ENCODE measurements at regions of chr6 and their contacts with region 1.

Region 1: GRCh38 chr6:169789982-169790927 is 38.8 kb downstream of the ERMARD start:
- DNase-seq: peak; percentile 79
- ATAC-seq: peak; percentile 95 to 97

Region 2: GRCh38 chr6:169627736-169628607 is 162.3 kb before region 1 on chr6:
- intact Hi-C with region 1: no loop called
- DNase-seq: no peak
- ATAC-seq: no peak

Region 3: GRCh38 chr6:170529839-170530469 is 739.7 kb after region 1 on chr6:
- intact Hi-C with region 1: loop called in 1 of 2 experiments (anchors 5 kb)
- DNase-seq: peak; percentile 82
- ATAC-seq: peak; percentile 87 to 89

Measured in left cardiac atrium (tissue), 4 donors.